MCF 10A (cell line): ENCODE measurements at regions of chr9 and their contacts with region 1.

Region 1: GRCh38 chr9:134059661-134060395 is 8.0 kb downstream of the BRD3 start:
- DNase-seq: no peak
- H3K4me3 Mint-ChIP-seq: no peak overlapping the region
- H3K27ac Mint-ChIP-seq: no peak overlapping the region
- H3K4me1 Mint-ChIP-seq: peaks cover 37% of the 10 kb centered on the region
- H3K27me3 Mint-ChIP-seq: no peaks in the 10 kb centered on the region
- CTCF ChIP-seq: no peak

Region 2: DNA sequence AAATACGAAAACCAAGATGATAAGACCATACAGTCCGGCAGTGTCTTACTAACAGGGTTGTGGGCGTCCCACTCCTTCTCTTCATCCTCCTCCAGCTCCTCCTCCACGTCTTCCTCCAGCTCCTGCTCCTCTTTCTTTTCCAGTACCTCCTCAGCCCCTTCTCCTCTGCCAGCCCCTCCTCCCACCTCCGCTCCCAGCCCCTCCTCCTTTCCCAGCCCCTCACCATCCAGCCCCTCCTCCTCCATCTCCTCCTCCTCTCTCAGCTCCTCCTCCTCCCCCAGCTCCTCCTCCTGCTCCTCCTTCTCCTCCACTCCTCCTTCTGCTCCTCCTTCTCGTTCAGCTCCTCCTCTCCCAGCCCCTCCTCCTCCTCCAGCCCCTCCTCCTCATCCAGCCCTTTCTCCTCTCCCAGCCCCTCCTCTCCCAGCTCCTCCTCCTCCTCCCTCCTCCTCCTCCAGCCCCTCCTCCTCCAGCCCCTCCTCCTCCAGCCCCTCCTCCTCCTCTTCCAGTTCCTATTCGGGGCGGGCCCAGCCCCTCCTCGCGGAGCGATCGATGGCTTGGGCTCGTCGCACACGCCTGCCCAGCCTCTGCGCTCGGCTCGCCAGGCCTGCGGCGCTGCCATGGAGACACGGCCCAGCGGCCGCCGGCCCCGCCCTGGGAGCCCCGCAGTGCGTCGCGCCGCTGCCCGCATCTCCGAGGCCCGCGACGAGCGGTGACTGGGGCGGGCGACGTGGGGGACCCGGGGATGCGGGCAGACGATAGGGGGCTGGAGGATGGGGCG is 34.8 kb before region 1 on chr9 and contains the start of gene BRD3OS:
- CTCF ChIA-PET with region 1: interaction called, 4 read pairs
- POLR2A ChIA-PET with region 1: interaction called, 10 read pairs
- intact Hi-C with region 1: no loop called
- DNase-seq: peak; percentile 98
- H3K4me3 Mint-ChIP-seq: peak within 1 kb of the TSS; percentile 80
- H3K27ac Mint-ChIP-seq: peak within 1 kb of the TSS; percentile 66
- H3K4me1 Mint-ChIP-seq: no peaks in the 10 kb centered on the region
- H3K27me3 Mint-ChIP-seq: no peaks in the 10 kb centered on the region
- CTCF ChIP-seq: no peak
- total RNA-seq, gene BRD3OS: 13.3 and 15.2 TPM in 2 replicates

Region 3: DNA sequence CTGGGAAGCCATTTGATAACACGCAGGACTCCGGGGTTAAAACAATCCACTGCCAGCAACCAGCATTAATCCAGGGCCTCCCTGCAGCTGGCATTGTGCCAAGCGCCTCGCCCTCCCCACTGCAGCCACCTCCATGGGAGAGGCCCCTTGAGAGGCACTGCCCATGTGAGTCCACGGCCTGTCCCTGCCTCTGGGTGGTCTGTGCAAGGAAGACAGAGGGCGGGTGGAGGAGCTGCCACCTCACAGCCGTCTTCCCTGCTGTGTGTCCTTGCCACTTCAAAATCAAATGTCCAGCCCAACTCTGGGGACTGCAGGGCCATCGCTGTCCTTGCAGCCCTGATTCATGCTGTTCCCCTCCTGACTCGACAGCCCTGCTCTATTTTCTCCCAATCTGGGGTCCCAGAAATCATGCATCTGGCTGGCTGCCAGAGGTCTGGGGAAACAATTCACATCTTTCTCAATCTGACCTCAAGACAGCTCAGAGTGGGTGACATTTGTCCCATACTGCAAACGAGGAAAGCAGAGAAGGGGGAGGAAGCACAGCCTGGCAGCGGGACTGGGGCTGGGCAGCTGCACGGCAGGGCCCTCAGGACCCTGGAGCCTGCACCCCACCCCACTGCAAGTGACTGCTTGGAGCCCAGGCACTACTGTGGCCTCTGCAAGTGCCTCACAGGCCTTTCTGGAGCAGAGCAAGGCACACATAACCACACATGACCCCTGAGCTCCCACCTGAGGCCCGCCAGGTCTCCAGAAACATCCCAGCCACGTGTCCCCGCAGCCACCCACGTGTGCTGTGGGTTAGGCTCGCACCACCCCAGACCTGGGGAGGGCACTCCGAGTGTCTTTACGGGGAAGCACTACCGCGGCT is 18.8 kb before region 1 on chr9:
- CTCF ChIA-PET with region 1: interaction called, 4 read pairs
- POLR2A ChIA-PET with region 1: interaction called, 10 read pairs
- intact Hi-C with region 1: no loop called
- DNase-seq: no peak
- H3K4me3 Mint-ChIP-seq: no peak overlapping the region
- H3K27ac Mint-ChIP-seq: no peak overlapping the region
- H3K4me1 Mint-ChIP-seq: no peaks in the 10 kb centered on the region
- H3K27me3 Mint-ChIP-seq: no peaks in the 10 kb centered on the region
- CTCF ChIP-seq: no peak

Region 4: DNA sequence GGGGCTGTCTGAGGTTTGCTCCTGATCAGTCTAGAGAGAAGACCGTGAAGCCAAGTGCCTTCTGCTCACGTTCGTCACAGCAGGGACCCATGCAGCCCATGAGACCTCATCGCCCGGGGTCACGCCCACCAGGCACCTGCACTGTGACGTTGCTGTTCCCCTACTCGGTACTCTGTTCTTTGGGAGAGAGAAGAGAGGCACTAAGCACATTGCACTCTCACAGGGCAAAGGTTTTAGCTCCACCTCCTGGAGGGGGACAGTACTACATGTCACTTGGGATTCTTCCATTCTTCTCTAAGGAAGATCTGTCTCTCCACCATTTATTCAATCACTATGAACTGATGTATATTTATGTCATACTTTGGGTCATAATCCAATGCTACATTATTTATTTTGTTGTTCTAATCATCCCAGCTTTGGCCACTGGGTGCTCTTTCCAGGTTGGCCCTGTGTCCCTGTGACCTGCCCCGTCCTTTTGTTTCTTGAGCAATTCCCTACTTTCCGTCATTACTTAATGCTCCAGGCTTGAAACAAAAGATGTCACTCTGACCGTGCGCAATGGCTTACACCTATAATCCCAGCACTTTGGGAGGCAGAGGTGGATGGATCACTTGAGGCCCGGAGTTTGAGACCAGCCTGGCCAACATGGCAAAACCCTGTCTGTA is 39.4 kb after region 1 on chr9:
- CTCF ChIA-PET with region 1: interaction called, 5 read pairs
- POLR2A ChIA-PET with region 1: interaction called, 3 read pairs
- intact Hi-C with region 1: loop called (anchors 5 kb)
- DNase-seq: peak; percentile 68
- H3K4me3 Mint-ChIP-seq: no peak overlapping the region
- H3K27ac Mint-ChIP-seq: no peak overlapping the region
- H3K4me1 Mint-ChIP-seq: peaks cover 5% of the 10 kb centered on the region
- H3K27me3 Mint-ChIP-seq: peaks cover 34% of the 10 kb centered on the region
- CTCF ChIP-seq: peak; percentile 83